Ascending aorta (tissue), 2 donors: ENCODE measurements at regions of chr3 and their contacts with region 1.

Region 1: DNA sequence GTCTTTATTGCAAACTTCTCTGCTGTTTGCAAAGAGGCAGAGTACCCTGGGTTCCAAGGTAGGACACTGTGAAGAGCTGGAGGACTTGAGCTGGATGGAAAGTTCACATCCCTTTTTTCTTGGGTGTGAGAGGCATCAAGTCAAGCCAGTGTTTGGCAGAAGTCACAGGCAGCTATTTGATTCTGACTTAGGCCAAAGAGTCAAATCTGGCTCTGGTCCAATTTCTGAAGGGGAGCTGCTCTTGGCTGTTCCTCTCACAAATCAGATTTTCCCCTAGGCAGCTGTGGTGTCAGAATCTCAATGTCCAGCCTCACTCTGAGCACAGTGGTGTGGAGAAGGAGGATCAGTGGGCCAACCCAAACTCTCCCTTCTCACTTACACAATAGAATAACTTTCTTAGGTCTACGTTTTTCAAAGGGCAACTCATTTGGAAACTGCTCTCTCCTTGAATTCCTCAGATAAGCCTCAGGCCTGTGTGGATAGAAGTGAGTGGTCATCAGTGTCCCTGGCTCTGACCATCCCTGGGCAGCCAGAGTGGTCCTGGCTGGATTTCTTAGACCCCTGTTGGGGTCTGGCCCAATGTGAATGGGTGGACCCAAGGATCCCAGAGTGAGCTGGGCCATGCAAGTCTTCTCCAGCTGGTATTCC is 18.2 kb upstream of the AMOTL2 start:
- DNase-seq: peak in 1 of 2 donors; percentile 86
- H3K4me3 ChIP-seq: peak overlapping the region in 1 of 2 donors; percentile 5
- H3K27ac ChIP-seq: peak overlapping the region; percentile 85 to 86
- H3K4me1 ChIP-seq: peaks cover 4 to 46% of the 10 kb centered on the region in 2 donors
- H3K27me3 ChIP-seq: no peaks in the 10 kb centered on the region
- CTCF ChIP-seq: no peak

Region 2: GRCh38 chr3:134373994-134374790 is 18.3 kb before region 1 on chr3 and contains the start of gene AMOTL2:
- intact Hi-C with region 1: loop called (anchors 2 kb)
- DNase-seq: peak in 1 of 2 donors; percentile 93
- H3K4me3 ChIP-seq: peak within 1 kb of the TSS; percentile 70 to 90
- H3K27ac ChIP-seq: peak within 1 kb of the TSS; percentile 93 to 99
- H3K4me1 ChIP-seq: peaks cover 24 to 36% of the 10 kb centered on the region in 2 donors
- H3K27me3 ChIP-seq: no peaks in the 10 kb centered on the region
- CTCF ChIP-seq: no peak
- total RNA-seq, gene AMOTL2: 156 TPM